ENCODE measurements at regions of chr1 and their contacts with region 1.

Region 1: GRCh38 chr1:189158155-189158554 is 1319.5 kb downstream of the BRINP3 start:
- DNase-seq: no peak
- ATAC-seq: no peak
- H3K4me3 ChIP-seq: no peak overlapping the region
- H3K4me3 Mint-ChIP-seq: no peak overlapping the region
- H3K27ac ChIP-seq: no peak overlapping the region
- H3K27ac Mint-ChIP-seq: no peak overlapping the region
- H3K4me1 ChIP-seq: no peaks in the 10 kb centered on the region
- H3K4me1 Mint-ChIP-seq: no peaks in the 10 kb centered on the region
- H3K27me3 ChIP-seq: no peaks in the 10 kb centered on the region
- H3K27me3 Mint-ChIP-seq: no peaks in the 10 kb centered on the region
- CTCF ChIP-seq: no peak

Region 2: DNA sequence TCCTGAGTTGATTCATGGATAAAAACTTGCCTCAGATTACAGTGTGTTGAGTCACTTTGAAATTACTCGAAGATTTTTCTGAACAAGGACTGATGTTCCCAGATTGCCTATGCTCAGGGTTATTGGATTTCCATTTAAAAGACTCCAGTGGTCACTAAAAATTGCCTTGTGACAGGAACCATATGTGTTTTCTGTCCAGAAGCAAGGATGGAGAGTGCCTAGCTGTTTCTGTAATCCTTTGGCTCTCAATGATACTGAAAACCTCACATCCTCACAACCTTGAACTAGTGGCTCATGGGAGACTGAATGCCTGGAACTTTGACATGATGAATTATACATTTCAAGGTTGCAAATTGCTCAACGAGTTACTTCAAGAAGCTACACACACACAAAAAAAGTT is 47.7 kb after region 1 on chr1:
- CTCF ChIA-PET with region 1: no interaction called
- POLR2A ChIA-PET with region 1: no interaction called
- intact Hi-C with region 1: loop called in 1 of 2 experiments (anchors 1 kb)
- DNase-seq: no peak
- ATAC-seq: no peak
- H3K4me3 ChIP-seq: no peak overlapping the region
- H3K4me3 Mint-ChIP-seq: no peak overlapping the region
- H3K27ac ChIP-seq: no peak overlapping the region
- H3K27ac Mint-ChIP-seq: no peak overlapping the region
- H3K4me1 ChIP-seq: no peaks in the 10 kb centered on the region
- H3K4me1 Mint-ChIP-seq: no peaks in the 10 kb centered on the region
- H3K27me3 ChIP-seq: no peaks in the 10 kb centered on the region
- H3K27me3 Mint-ChIP-seq: no peaks in the 10 kb centered on the region
- CTCF ChIP-seq: no peak